Posterior cingulate gyrus (tissue), 11 donors: ENCODE measurements at regions of chr12 and their contacts with region 1.

Region 1: GRCh38 chr12:32455607-32456071 is 56.3 kb downstream of the FGD4 start:
- DNase-seq: no peak

Region 2: GRCh38 chr12:32273712-32274111 is 181.9 kb before region 1 on chr12:
- intact Hi-C with region 1: no loop called
- DNase-seq: no peak

Region 3: DNA sequence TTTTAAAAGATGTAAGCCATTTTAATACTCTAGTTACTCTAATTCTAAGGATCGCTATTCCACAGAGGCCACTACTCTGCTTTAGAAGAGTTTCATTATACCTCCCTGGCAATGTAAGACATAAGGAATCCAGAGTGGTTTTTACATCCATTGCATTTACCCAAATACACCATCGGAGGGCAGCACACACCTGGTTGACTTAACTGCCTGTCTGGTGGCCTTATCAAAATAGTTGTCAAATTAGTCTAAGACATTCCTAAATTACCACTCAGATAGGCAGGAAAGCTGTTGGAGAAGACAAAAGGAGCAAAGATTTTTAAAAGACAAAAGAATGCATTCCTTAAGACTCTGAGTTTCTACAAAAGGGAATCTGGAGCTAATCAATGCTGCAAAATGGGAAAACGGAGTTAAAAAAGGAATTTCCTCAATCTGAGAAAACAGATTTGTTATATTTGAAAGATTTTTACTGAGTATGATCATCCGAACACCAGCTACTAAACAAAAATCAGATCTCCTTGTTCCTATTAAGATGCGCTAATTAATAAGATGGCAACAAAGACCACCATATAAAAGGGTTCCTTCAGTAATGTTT is 90.1 kb before region 1 on chr12:
- intact Hi-C with region 1: loop called (anchors 5 kb)
- DNase-seq: peak in 6 of 10 donors; percentile 25 to 46 (median 34)

Region 4: GRCh38 chr12:32535288-32535999 is 79.8 kb after region 1 on chr12:
- intact Hi-C with region 1: loop called (anchors 5 kb)
- DNase-seq: peak; percentile 65 to 97 (median 78)

Region 5: GRCh38 chr12:32659908-32660440 is 204.3 kb after region 1 on chr12:
- intact Hi-C with region 1: loop called (anchors 1 kb)
- DNase-seq: no peak

Region 6: GRCh38 chr12:32671930-32672780 is 216.5 kb after region 1 on chr12:
- intact Hi-C with region 1: loop called (anchors 1 kb)
- DNase-seq: peak in 4 of 10 donors; percentile 27 to 44 (median 36)